ENCODE measurements at regions of chr19 and their contacts with region 1.

Region 1: GRCh38 chr19:39532233-39533002 is at the start of gene EID2B:
- DNase-seq: peak; percentile 96
- H3K4me3 Mint-ChIP-seq: peak within 1 kb of the TSS; percentile 93
- H3K27ac Mint-ChIP-seq: peak within 1 kb of the TSS; percentile 81
- H3K4me1 Mint-ChIP-seq: peaks cover 29% of the 10 kb centered on the region
- H3K27me3 Mint-ChIP-seq: no peaks in the 10 kb centered on the region
- total RNA-seq, gene EID2B: 5.7 to 6.2 TPM

Region 2: DNA sequence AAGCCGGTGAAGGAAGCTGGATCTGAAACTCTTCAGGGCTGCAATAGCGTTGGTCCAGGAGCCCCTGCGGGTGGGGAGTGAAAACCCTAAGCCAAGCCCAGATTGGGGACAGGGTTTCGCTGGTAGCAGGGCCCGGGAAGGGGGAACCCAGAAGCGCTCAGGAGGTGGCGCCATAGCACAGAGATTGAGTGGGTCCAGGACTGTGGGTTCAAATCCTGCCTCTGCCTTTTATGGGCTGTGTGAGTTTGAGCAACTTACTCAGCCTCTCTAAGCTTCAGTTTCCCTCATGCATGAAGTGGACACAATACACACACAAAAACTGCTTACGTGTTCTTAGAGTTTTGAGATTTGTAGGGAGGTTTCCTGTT is 320.1 kb before region 1 on chr19:
- CTCF ChIA-PET with region 1: no interaction called
- intact Hi-C with region 1: loop called (anchors 10 kb)
- DNase-seq: peak; percentile 84
- H3K4me3 Mint-ChIP-seq: no peak overlapping the region
- H3K27ac Mint-ChIP-seq: no peak overlapping the region
- H3K4me1 Mint-ChIP-seq: no peaks in the 10 kb centered on the region
- H3K27me3 Mint-ChIP-seq: peaks cover 2% of the 10 kb centered on the region

Region 3: DNA sequence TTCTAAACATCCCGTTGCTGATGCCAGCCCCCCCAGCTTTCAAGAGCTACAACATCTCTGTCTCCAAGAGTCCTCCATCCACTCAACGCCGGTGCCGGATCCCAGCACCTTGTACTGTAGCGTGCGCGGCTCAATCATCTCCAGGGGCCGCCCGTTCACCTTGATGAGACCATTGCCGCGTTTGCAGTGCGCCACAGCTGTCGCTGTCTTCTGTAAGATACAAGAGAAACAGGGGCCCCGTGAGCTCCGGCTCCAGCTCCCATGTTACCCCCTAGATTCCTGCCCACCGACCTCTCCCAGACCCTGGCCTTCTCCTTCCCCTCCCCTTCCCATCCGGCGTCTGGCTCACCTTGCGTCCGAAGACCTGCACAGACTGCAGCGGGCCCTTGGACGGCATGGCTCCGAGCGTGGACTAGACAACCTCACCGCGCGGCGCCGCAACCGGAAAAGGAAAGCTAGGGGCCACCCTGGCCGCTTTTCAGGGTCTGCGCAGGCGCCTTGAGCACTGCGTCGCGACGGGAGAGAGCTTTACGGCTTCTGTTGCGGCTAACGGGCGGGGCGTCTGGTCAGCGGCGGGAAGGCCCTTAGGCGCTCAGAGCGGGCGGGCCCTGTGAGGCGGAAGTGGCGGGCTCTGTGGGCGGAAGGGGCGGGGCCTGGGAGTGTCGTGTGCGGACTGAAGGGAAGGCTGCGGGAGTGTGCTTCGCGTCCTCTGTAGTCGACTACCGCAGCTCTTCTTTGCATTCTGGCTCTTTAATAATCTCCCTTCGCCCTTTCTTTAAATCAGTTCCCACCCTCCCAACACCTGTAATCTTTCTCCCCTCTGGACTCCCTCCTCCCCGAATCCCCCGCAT is 96.7 kb before region 1 on chr19 and contains the start of gene RPS16:
- CTCF ChIA-PET with region 1: interaction called, 61 read pairs
- intact Hi-C with region 1: loop called (anchors 1 kb)
- DNase-seq: peak; percentile 99
- H3K4me3 Mint-ChIP-seq: peak within 1 kb of the TSS; percentile 99
- H3K27ac Mint-ChIP-seq: peak within 1 kb of the TSS; percentile 99
- H3K4me1 Mint-ChIP-seq: peaks cover 54% of the 10 kb centered on the region
- H3K27me3 Mint-ChIP-seq: no peaks in the 10 kb centered on the region
- total RNA-seq, gene RPS16: 4,195 to 4,327 TPM

Region 4: GRCh38 chr19:39474139-39474622 is 58.2 kb before region 1 on chr19:
- CTCF ChIA-PET with region 1: interaction called, 9 read pairs
- intact Hi-C with region 1: loop called (anchors 1 kb)
- DNase-seq: peak; percentile 76
- H3K4me3 Mint-ChIP-seq: no peak overlapping the region
- H3K27ac Mint-ChIP-seq: no peak overlapping the region
- H3K4me1 Mint-ChIP-seq: peaks cover 17% of the 10 kb centered on the region
- H3K27me3 Mint-ChIP-seq: no peaks in the 10 kb centered on the region

Region 5: GRCh38 chr19:39502640-39503417 is 29.6 kb before region 1 on chr19:
- CTCF ChIA-PET with region 1: interaction called, 40 read pairs
- intact Hi-C with region 1: loop called (anchors 1 kb)
- DNase-seq: peak; percentile 68
- H3K4me3 Mint-ChIP-seq: no peak overlapping the region
- H3K27ac Mint-ChIP-seq: no peak overlapping the region
- H3K4me1 Mint-ChIP-seq: peaks cover 34% of the 10 kb centered on the region
- H3K27me3 Mint-ChIP-seq: peaks cover 65% of the 10 kb centered on the region

Region 6: GRCh38 chr19:39858541-39858940 is 326.1 kb after region 1 on chr19:
- CTCF ChIA-PET with region 1: no interaction called
- intact Hi-C with region 1: no loop called
- DNase-seq: peak; percentile 82
- H3K4me3 Mint-ChIP-seq: peak overlapping the region; percentile 72
- H3K27ac Mint-ChIP-seq: peak overlapping the region; percentile 79
- H3K4me1 Mint-ChIP-seq: peaks cover 4% of the 10 kb centered on the region
- H3K27me3 Mint-ChIP-seq: no peaks in the 10 kb centered on the region

Measured in activated naive CD4-positive, alpha-beta T cell treated with anti-CD3 and anti-CD28 coated beads for 36 hours (primary cell).